AG04450 (cell line): ENCODE measurements at regions of chr7 and their contacts with region 1.

Region 1: GRCh38 chr7:129572205-129572604 is 39.3 kb upstream of the NRF1 start:
- DNase-seq: no peak
- H3K4me3 ChIP-seq: no peak overlapping the region
- H3K27ac ChIP-seq: no peak overlapping the region
- H3K27me3 ChIP-seq: no peaks in the 10 kb centered on the region
- CTCF ChIP-seq: no peak

Region 2: DNA sequence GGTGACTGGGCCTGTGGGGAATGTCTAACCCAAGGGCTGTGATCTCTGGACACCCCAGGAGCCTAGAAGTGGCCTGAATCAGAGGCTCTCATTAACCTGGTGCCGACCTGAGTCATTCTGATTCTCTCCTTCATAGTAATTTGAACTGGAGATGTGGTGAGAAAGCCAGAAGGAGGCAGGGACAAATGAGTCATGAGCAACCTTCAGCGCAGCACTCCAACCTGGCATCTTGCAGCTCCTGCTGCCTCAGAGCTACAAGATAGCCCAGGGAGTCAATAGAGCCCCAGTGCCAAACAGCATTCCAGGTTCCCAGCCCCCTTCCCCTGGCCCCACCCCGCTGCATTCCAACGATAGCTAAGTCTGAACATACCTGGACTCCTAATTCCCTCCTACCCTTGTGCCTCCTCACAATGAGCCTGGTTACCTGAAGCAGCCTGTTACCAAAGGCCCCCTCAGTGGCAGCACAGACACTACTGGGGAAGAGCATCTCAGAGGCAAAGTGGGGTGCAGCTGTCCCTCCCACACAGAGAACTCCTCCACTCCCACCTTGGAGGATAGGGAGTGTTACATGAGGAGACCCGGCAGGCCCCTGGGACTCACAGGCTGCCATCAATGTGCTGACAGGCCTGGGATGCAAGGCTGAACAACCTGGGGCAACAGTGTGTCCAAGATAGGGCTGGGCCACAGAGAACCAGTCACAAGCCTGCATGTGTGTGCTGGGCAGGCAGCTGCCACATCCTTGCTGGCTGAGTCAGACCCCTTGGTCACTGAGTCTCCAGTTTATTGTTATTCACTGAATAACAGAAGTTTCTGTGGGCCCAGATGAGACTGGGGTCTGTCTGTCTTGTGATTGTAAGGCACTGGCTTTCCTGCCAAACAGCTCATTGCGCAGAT is 1407.9 kb before region 1 on chr7:
- CTCF ChIA-PET with region 1: no interaction called
- POLR2A ChIA-PET with region 1: no interaction called
- DNase-seq: no peak
- H3K4me3 ChIP-seq: no peak overlapping the region
- H3K27ac ChIP-seq: no peak overlapping the region
- H3K27me3 ChIP-seq: peaks cover 51% of the 10 kb centered on the region
- CTCF ChIP-seq: no peak

Region 3: DNA sequence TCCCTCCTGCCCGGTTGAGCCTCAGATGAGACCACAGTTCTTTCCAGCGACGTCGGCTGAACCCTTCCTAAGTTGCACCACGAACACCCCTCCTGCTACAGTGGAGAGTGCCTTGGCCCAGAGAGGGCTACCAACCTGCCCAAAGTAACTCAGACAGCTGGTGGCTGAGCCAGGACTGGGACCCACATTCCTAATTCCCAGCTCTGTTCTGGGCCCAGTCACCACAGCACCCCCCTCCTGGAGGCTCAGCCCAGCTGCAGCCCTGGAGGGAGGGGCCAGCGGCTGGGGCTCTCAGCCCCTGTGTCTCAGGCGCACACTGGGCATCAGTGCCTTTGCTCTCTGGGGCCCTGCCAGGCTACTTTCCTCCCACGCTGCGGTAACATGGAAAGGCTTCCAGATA is 699.0 kb before region 1 on chr7:
- CTCF ChIA-PET with region 1: no interaction called
- POLR2A ChIA-PET with region 1: interaction called, 10 read pairs
- DNase-seq: no peak
- H3K4me3 ChIP-seq: no peak overlapping the region
- H3K27ac ChIP-seq: no peak overlapping the region
- H3K27me3 ChIP-seq: peaks cover 34% of the 10 kb centered on the region
- CTCF ChIP-seq: no peak

Region 4: GRCh38 chr7:129553861-129554530 is 18.2 kb before region 1 on chr7:
- CTCF ChIA-PET with region 1: no interaction called
- POLR2A ChIA-PET with region 1: no interaction called
- DNase-seq: no peak
- H3K4me3 ChIP-seq: peak overlapping the region; percentile 31
- H3K27ac ChIP-seq: no peak overlapping the region
- H3K27me3 ChIP-seq: peaks cover 16% of the 10 kb centered on the region
- CTCF ChIP-seq: no peak

Region 5: DNA sequence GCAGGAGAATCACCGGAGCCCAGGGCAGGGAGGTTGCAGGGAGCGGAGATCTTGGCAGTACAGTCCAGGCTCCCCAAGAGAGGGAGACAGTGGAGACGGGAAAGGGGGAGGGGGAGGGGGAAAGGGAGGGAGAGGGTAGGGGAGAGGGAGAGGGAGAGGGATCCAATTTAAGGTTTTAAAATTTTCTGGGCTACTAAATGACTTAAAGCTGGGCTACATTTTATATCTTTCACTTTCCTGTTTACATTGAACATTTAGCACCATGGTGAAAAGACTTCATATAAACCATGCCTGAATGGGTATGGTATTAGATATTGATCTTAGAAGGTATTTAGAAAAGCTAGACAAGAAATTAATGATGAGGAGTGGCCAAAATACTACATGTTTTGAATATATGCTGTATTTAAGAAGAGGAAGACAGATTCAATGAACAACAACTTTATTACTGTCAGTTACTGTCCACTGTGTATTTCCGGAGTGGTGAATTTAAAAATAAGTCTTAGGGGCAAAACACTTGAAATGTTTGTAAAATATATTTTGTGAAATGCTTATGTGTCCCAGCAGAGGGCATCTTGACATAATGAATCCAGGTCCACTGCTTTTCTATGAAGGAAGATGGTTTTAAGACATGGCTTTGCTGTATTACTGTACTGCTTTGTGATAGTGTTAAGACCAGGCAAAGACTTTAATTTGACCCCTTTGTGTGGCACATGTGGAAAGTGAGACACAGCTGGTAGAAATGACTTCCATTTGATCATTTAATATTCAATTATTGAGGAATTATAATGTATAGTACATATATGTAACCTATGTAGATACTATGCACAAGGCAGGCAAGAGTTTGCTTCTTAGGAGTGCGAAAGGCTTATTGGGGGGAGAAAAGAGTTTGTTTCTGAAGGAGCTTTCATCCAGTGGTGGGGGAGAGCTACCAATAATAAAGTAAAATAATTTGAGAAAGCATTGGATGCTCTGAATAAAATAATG is 92.1 kb after region 1 on chr7:
- CTCF ChIA-PET with region 1: no interaction called
- POLR2A ChIA-PET with region 1: no interaction called
- DNase-seq: peak; percentile 57
- H3K4me3 ChIP-seq: no peak overlapping the region
- H3K27ac ChIP-seq: no peak overlapping the region
- H3K27me3 ChIP-seq: no peaks in the 10 kb centered on the region
- CTCF ChIP-seq: peak; percentile 69